ENCODE measurements at regions of chr10 and their contacts with region 1.

Region 1: DNA sequence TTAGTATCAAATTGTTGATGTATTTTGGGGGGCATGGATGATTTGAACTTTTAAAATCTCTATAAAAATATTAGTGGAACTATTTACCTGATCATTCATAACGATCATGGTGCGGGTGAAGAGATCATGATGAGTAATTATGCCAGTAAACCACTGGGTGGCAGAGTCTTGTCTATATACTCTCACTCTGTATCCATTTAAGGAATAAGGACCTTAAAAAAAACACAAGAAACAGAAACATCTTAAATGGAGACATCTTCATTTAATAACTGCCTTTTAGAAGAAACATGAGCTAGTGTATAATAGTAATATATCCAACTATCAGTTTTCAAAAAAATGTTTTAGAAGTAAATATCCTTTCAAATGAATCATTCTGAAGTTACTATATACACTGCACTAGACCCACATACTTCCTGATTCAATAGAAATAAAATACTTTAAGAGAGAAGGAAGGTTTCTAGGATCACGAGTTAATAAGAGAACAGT is 84.0 kb downstream of the NRBF2 start:
- DNase-seq: no peak
- ATAC-seq: peak; percentile 89
- H3K4me3 Mint-ChIP-seq: no peak overlapping the region
- H3K27ac Mint-ChIP-seq: peak overlapping the region; percentile 41
- H3K4me1 Mint-ChIP-seq: peaks cover 60% of the 10 kb centered on the region
- H3K27me3 Mint-ChIP-seq: no peaks in the 10 kb centered on the region
- CTCF ChIP-seq: no peak

Region 2: GRCh38 chr10:63227207-63227915 is 10.2 kb after region 1 on chr10:
- CTCF ChIA-PET with region 1: interaction called, 3 read pairs
- POLR2A ChIA-PET with region 1: no interaction called
- intact Hi-C with region 1: loop called (anchors 1 kb)
- DNase-seq: no peak
- ATAC-seq: no peak
- H3K4me3 Mint-ChIP-seq: peak overlapping the region; percentile 12
- H3K27ac Mint-ChIP-seq: peak overlapping the region; percentile 59
- H3K4me1 Mint-ChIP-seq: peaks cover 71% of the 10 kb centered on the region
- H3K27me3 Mint-ChIP-seq: no peaks in the 10 kb centered on the region
- CTCF ChIP-seq: no peak

Region 3: DNA sequence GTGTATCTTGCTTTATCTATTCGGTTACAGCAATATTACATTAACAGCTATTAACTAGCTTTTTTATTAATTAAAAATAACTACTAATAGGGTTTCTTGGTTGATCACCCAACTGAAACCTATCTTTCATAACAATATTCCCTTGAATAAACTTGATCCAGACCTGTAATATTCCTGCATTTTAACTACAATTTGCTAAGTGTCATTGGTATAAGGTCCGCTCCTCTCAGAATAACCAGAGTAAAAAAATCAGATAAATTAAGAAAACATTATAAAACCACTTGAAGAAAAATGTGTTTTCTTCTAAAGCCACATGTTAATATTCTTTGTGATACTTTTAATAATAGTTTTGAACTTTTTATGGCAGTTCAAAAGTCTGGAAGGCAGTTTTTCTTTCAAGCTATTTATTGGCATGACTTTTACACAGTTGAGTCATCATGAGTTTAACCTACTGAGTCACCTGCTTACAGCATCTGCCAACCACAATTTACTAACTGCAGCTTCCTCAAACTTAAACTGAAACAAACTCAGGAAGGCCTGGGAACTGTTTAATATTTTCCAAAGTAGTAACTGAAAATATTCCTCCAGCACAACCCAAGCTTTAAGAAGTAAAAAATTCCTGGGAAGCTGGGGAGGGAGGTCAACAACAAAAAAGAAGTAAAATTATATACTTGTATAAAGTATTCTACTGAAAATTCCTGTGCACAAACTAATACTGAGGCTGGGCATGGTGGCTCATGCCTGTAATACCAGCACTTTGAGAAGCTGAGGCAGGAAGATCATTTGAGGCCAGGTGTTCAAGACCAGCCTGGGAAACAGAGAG is 19.2 kb after region 1 on chr10:
- CTCF ChIA-PET with region 1: interaction called, 3 read pairs
- POLR2A ChIA-PET with region 1: no interaction called
- intact Hi-C with region 1: loop called (anchors 2 kb)
- DNase-seq: no peak
- ATAC-seq: peak; percentile 88
- H3K4me3 Mint-ChIP-seq: no peak overlapping the region
- H3K27ac Mint-ChIP-seq: peak overlapping the region; percentile 69
- H3K4me1 Mint-ChIP-seq: peaks cover 74% of the 10 kb centered on the region
- H3K27me3 Mint-ChIP-seq: no peaks in the 10 kb centered on the region
- CTCF ChIP-seq: no peak

Region 4: DNA sequence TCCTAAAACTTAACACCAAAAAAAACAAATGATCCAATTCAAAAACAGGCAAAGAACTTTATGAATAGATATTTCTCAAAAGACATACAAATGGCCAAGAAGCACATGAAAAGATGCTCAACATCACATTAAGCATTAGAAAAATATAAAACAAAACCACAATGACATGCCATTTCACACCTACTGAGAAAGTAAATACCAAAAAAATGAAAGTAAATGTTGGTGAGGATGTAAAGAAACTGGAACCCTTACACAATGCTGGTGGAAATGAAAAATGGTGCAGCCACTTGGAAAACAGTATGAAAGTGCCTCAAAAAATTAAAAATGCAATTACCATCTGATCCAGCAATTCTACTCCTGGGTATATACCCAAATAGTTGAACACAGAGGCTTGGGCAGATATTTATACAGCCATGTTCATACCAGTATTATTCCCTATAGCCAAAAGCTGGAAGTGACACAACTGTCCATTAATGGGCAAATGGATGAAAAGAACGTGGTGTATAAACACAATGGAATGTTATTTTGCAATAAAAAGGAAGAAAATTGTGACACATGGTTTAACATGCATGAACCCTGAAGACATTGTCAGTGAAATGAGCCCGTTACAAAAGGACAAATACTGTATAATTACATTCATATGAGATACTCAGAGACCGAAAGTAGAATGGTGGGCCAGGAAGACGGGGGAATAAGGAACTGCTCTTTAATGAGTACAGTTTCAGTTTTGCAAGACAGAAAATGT is 159.6 kb after region 1 on chr10:
- CTCF ChIA-PET with region 1: no interaction called
- POLR2A ChIA-PET with region 1: no interaction called
- intact Hi-C with region 1: loop called (anchors 2 kb)
- DNase-seq: no peak
- ATAC-seq: peak; percentile 92
- H3K4me3 Mint-ChIP-seq: peak overlapping the region; percentile 72
- H3K27ac Mint-ChIP-seq: peak overlapping the region; percentile 53
- H3K4me1 Mint-ChIP-seq: peaks cover 15% of the 10 kb centered on the region
- H3K27me3 Mint-ChIP-seq: no peaks in the 10 kb centered on the region
- CTCF ChIP-seq: no peak

Region 5: GRCh38 chr10:63441404-63441803 is 224.2 kb after region 1 on chr10:
- CTCF ChIA-PET with region 1: no interaction called
- POLR2A ChIA-PET with region 1: interaction called, 11 read pairs
- intact Hi-C with region 1: no loop called
- DNase-seq: no peak
- ATAC-seq: no peak
- H3K4me3 Mint-ChIP-seq: no peak overlapping the region
- H3K27ac Mint-ChIP-seq: peak overlapping the region; percentile 16
- H3K4me1 Mint-ChIP-seq: peaks cover 9% of the 10 kb centered on the region
- H3K27me3 Mint-ChIP-seq: no peaks in the 10 kb centered on the region
- CTCF ChIP-seq: no peak

Region 6: DNA sequence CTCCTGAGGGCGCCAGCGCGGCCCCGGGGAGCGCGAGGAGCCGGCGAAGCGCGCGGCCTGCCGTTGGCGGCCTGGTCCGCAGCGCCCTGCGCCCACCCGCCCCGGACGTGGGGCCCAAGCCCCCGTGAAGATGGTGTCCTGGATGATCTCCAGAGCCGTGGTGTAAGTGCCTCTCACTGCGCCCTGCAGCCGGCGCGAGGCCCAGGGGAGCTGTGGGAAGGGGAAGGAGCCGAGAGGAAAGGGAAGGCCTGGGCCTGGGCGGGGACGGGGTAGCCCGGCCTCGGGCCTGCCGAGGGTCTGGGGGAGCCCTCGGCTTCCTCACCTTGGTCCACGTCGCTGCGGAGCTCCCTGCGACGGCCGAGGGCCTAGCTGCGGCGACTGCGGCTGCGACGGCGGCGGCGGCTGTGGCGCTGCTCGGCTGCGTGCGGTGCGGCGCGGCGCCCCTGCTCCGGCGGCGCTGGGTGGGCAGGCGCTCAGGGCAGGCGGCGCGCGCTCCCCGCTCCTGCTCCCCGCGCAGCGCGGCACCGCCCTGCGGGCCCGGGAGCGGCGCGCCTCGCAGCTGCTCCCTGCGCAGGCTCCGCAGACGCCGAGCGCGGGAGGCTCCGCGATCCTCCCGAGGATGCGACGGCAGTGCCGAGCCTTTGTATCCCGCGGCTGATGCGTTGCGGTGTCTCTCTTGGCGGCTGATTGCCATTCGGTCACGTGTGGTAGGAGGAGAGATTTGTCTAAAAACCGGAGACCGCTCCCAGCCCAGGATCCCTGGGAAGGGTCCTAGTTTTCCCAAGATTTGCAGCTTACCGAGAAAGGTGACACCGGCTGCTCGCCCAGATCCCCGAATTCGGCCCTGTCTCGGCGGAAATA is 304.5 kb after region 1 on chr10:
- CTCF ChIA-PET with region 1: no interaction called
- POLR2A ChIA-PET with region 1: no interaction called
- intact Hi-C with region 1: loop called (anchors 5 kb)
- DNase-seq: peak; percentile 72
- ATAC-seq: peak; percentile 70
- H3K4me3 Mint-ChIP-seq: peak overlapping the region; percentile 86
- H3K27ac Mint-ChIP-seq: peak overlapping the region; percentile 72
- H3K4me1 Mint-ChIP-seq: peaks cover 47% of the 10 kb centered on the region
- H3K27me3 Mint-ChIP-seq: no peaks in the 10 kb centered on the region
- CTCF ChIP-seq: no peak

Region 7: DNA sequence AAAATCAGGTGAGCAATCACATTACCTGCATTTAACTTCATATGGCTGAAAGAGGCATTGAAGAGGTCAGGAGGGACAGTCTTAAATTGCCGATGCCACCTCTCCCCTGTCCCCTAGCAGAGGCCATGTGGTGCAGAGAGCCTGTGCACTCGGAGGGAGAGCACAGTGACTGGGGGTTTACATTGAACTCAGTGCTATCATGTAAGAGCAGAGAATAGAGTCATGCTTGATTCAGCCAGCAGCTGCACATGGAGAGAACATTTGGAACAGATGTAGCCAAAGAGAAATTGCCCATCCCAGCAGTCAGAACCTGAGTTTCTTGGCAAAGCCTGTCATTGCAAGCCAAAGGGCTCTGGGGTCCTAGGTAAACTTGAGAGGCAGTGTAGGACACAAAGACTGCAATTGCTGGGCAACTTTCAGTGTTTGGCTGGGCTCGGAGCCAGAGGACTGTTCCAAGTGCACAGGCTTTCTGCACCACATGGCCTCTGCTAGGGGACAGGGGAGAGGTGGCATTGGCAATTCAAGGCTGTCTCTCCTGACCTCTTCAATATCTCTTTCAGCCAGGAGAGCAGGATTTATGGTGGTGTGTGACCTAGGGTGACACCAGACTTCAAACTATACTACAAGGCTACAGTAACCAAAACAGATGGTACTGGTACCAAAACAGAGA is 571.1 kb after region 1 on chr10:
- CTCF ChIA-PET with region 1: no interaction called
- POLR2A ChIA-PET with region 1: no interaction called
- intact Hi-C with region 1: no loop called
- DNase-seq: no peak
- ATAC-seq: no peak
- H3K4me3 Mint-ChIP-seq: no peak overlapping the region
- H3K27ac Mint-ChIP-seq: no peak overlapping the region
- H3K4me1 Mint-ChIP-seq: no peaks in the 10 kb centered on the region
- H3K27me3 Mint-ChIP-seq: peaks cover 22% of the 10 kb centered on the region
- CTCF ChIP-seq: no peak